MCF 10A (cell line): ENCODE measurements at regions of chr1 and their contacts with region 1.

Region 1: DNA sequence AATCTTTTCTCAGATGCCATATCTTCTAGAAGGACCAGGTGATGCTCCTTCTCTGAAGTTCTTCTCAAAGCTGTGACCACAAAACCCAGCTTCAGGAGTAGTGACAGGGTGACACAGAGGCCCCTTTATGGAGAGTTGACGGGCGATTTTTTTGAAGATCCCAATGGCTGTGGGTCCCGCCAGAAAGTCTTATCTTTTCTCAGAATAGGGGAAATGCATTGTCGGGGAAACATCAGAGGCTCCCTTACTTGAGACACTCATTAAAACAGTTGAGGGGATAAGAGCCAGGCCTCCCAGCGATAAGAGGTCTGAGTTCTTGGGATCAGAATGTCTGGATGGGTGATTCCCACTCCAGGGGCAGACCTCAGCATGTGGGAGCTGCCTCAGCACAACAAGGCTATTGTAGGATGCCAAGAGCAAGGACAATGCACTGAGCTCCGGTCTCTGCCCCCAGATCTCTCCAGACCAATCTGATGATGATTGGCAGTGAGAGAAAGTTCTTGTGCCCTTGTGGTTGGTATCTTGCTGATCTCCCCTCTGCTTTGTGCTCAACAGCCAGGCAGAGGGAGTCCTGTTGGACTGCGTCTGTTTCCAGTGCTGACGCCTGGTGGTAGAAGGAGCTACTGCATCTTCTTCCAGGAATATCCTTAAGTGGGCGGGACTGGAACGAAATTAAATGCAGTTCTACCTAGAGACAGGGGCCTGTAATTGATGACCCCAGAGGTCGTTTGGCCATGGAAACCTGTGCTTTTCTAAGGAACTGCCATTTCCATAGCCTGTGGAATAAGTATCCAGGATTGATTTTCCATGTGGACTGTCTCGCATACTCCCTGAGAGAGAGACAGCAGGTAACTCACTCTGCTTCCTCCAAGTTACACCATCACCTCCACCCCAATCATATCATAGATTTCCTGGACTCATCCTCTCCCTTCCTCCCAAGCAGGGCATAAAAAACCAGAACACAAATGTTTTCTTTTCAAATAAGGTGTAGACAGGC is 6.8 kb upstream of the ACKR1 start:
- DNase-seq: peak; percentile 88
- H3K4me3 Mint-ChIP-seq: no peak overlapping the region
- H3K27ac Mint-ChIP-seq: no peak overlapping the region
- H3K4me1 Mint-ChIP-seq: peaks cover 32% of the 10 kb centered on the region
- H3K27me3 Mint-ChIP-seq: no peaks in the 10 kb centered on the region
- CTCF ChIP-seq: peak; percentile 95

Region 2: DNA sequence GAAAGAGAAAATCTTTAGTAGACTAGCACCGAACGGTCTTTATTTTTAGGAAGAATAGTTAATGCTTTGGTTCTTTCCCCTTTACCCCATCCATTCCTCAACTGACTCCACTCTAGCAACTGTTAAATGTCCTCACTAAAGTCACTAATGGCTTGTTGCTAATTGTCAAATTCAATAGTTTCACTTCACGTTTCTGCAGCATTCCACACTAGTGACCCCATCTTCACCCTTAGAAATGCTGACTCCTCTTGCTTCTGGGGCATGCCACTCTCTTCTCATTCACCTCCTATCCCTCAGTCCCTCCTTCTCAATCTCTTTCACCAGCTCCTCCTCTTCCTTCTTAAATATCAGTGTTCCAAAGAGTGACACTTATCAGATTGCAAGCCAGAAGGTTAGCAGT is 45.8 kb before region 1 on chr1:
- CTCF ChIA-PET with region 1: interaction called, 35 read pairs
- POLR2A ChIA-PET with region 1: interaction called, 6 read pairs
- intact Hi-C with region 1: no loop called
- DNase-seq: no peak
- H3K4me3 Mint-ChIP-seq: no peak overlapping the region
- H3K27ac Mint-ChIP-seq: no peak overlapping the region
- H3K4me1 Mint-ChIP-seq: peaks cover 7% of the 10 kb centered on the region
- H3K27me3 Mint-ChIP-seq: peaks cover 12% of the 10 kb centered on the region
- CTCF ChIP-seq: no peak

Region 3: GRCh38 chr1:159177273-159177907 is 20.5 kb before region 1 on chr1:
- CTCF ChIA-PET with region 1: interaction called, 386 read pairs
- POLR2A ChIA-PET with region 1: interaction called, 3 read pairs
- intact Hi-C with region 1: no loop called
- DNase-seq: peak; percentile 93
- H3K4me3 Mint-ChIP-seq: no peak overlapping the region
- H3K27ac Mint-ChIP-seq: no peak overlapping the region
- H3K4me1 Mint-ChIP-seq: peaks cover 33% of the 10 kb centered on the region
- H3K27me3 Mint-ChIP-seq: peaks cover 35% of the 10 kb centered on the region
- CTCF ChIP-seq: no peak